Heart right ventricle (tissue), 16 donors: ENCODE measurements at regions of chr1 and their contacts with region 1.

Region 1: GRCh38 chr1:222034790-222035189 is 292.9 kb upstream of the DUSP10 start:
- DNase-seq: no peak
- ATAC-seq: peak in 2 of 8 donors; percentile 48 to 53
- H3K4me3 ChIP-seq: no peak overlapping the region
- H3K27ac ChIP-seq: no peak overlapping the region
- H3K4me1 ChIP-seq: peaks cover 0 to 29% (median 9%) of the 10 kb centered on the region in 9 donors
- H3K27me3 ChIP-seq: no peaks in the 10 kb centered on the region
- CTCF ChIP-seq: no peak

Region 2: DNA sequence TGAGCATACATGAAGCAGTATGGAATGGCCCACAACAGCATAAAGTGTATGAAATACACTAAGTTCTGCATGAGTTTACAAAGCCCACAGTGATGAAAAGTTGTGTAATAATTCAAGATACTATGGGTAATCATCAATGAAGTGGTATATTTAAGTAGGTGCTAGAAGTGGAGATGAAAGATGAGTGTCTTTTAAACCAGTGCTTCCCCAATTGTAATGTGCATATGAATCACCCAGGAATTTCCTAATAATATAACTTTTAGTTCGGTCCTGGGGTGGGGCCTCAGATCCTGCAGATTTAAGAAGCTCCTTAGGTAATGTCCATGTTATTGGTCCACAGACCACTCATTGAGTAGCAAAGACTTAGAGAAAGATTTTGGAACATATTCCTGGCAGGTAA is 477.8 kb before region 1 on chr1:
- intact Hi-C with region 1: loop called in 1 of 10 experiments (anchors 10 kb)
- DNase-seq: no peak
- ATAC-seq: no peak
- H3K4me3 ChIP-seq: no peak overlapping the region
- H3K27ac ChIP-seq: no peak overlapping the region
- H3K4me1 ChIP-seq: peaks cover 0 to 3% (median 0%) of the 10 kb centered on the region in 9 donors
- H3K27me3 ChIP-seq: no peaks in the 10 kb centered on the region
- CTCF ChIP-seq: no peak

Region 3: DNA sequence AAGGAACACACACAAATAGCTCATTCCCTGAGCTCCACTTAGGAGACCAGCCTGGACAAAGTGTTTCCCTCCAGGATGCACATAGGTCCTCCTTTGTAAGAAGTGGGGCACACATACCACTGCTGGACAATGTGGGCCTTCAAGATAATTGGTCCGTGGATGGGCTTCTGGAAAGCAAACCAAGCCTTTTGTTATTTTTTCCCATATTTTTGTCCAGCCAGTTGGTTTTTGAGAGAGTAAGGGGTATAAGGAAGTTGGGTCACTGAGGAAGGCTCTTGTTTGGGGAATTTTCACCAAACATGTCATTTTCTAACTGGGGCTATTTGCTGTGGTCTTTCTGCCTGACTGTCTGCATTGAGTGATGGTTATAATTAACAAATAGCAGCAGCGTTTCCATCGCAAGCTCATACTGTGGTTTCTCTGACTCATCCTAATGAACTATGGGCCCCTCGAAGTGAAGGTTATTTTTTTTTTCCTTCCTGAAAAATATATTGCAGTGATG is 13.4 kb after region 1 on chr1:
- intact Hi-C with region 1: no loop called
- DNase-seq: no peak
- ATAC-seq: no peak
- H3K4me3 ChIP-seq: no peak overlapping the region
- H3K27ac ChIP-seq: no peak overlapping the region
- H3K4me1 ChIP-seq: peaks cover 0 to 15% (median 10%) of the 10 kb centered on the region in 9 donors
- H3K27me3 ChIP-seq: no peaks in the 10 kb centered on the region
- CTCF ChIP-seq: no peak